ENCODE measurements at regions of chr6 and their contacts with region 1.

Region 1: DNA sequence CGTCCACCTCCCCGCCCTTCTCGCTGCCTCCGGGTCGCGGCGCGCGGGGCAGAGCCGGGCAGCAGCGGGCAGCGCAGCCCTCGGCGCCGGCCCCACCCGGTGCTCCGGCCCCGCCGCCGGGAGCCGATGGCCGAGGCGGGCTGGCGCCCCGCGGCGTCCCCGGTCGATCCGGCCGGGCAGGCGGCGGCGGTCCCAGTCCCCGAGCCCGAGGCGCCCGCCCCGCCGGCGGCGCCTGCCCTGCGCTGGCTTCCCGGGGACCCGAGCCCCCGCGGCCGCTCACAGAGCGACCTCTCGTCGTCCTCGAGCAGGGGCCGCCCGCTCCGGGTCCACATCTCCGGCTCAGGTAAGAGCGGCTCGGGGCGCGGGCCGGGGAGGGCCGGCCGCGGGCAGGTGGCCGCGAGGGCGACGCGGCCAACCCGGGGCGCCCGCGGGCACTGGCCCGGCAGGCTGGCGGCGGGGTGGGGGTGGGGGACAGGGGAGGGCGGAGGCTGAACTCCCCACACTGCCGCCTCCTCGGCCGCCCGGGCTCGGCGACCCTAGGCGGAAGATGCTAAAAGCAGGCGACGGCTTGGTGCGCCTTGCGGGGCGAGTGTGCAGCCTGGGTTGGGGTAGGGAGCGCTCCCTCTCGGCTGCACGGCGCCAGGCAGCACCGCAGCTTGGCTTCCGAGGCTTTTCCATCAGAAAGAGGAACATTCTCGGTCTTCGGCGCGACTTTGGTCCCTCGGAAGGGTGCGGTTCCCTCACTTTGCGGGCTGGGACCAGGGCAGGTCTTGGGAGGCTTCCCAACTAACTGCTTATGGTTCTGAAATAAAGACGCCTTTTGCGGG is 25.6 kb upstream of the FUCA2 start:
- DNase-seq: peak; percentile 25 to 79 (median 57)
- ATAC-seq: peak; percentile 75
- H3K4me3 ChIP-seq: peak overlapping the region; percentile 54 to 73
- H3K4me3 Mint-ChIP-seq: peak overlapping the region; percentile 84
- H3K27ac ChIP-seq: peak overlapping the region in 1 of 2 experiments; percentile 62
- H3K27ac Mint-ChIP-seq: peak overlapping the region; percentile 90
- H3K4me1 ChIP-seq: peaks cover 5% of the 10 kb centered on the region
- H3K4me1 Mint-ChIP-seq: peaks cover 36% of the 10 kb centered on the region
- H3K27me3 ChIP-seq: no peaks in the 10 kb centered on the region
- H3K27me3 Mint-ChIP-seq: no peaks in the 10 kb centered on the region
- CTCF ChIP-seq: peak; percentile 53

Region 2: GRCh38 chr6:143510991-143511891 is 25.8 kb before region 1 on chr6 and contains the start of gene FUCA2:
- CTCF ChIA-PET with region 1: interaction called, 5 read pairs
- POLR2A ChIA-PET with region 1: interaction called, 9 read pairs
- intact Hi-C with region 1: loop called in 1 of 2 experiments (anchors 2 kb)
- DNase-seq: peak; percentile 28 to 83 (median 64)
- ATAC-seq: peak; percentile 70
- H3K4me3 ChIP-seq: peak within 1 kb of the TSS; percentile 61 to 71
- H3K4me3 Mint-ChIP-seq: peak within 1 kb of the TSS; percentile 90
- H3K27ac ChIP-seq: peak within 1 kb of the TSS; percentile 26 to 70
- H3K27ac Mint-ChIP-seq: peak within 1 kb of the TSS; percentile 82
- H3K4me1 ChIP-seq: peaks cover 10% of the 10 kb centered on the region
- H3K4me1 Mint-ChIP-seq: peaks cover 25% of the 10 kb centered on the region
- H3K27me3 ChIP-seq: no peaks in the 10 kb centered on the region
- H3K27me3 Mint-ChIP-seq: no peaks in the 10 kb centered on the region
- CTCF ChIP-seq: no peak
- total RNA-seq, gene FUCA2: 1.6 to 2.2 TPM

Region 3: DNA sequence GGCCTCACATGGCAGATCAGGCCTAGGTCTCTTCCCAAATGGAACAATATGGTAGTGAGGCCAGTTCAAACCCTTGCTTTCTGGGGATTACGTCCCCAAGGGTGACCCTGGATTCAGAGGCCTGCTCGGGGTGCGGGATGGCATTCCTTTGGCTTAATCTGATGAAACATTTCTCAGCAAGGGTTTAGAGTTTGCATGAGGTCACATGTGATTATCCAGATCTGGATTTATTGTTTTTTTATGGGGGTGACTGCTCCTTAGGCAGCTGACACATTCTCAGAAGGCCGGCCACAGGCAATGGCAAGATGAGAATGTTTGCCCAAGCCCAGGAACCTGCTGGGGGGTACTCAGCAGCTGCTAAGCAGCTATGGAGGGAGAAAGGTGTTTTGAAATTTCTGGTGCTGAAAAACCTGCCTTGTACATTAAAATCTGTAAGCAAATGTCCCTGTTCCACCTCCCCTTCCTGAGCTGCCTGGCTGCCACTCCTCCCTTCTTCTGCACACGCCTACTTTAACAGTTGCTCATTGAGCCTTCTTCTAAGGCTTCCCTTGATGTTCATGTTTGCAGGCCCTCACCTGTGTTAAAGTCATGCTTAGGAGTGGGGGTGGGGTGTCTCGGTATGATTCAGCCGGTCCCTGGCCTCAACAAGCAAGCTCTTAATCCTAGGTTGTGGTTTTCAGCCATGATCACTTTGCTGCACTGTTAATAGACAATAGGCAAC is 12.3 kb after region 1 on chr6:
- CTCF ChIA-PET with region 1: interaction called, 4 read pairs
- POLR2A ChIA-PET with region 1: interaction called, 8 read pairs
- intact Hi-C with region 1: loop called in 1 of 2 experiments (anchors 1 kb)
- DNase-seq: peak in 2 of 9 experiments; percentile 20 to 32
- ATAC-seq: peak; percentile 34
- H3K4me3 ChIP-seq: no peak overlapping the region
- H3K4me3 Mint-ChIP-seq: no peak overlapping the region
- H3K27ac ChIP-seq: no peak overlapping the region
- H3K27ac Mint-ChIP-seq: peak overlapping the region; percentile 9
- H3K4me1 ChIP-seq: peaks cover 10% of the 10 kb centered on the region
- H3K4me1 Mint-ChIP-seq: peaks cover 64% of the 10 kb centered on the region
- H3K27me3 ChIP-seq: no peaks in the 10 kb centered on the region
- H3K27me3 Mint-ChIP-seq: no peaks in the 10 kb centered on the region
- CTCF ChIP-seq: no peak

Region 4: GRCh38 chr6:143570147-143570853 is 33.2 kb after region 1 on chr6:
- CTCF ChIA-PET with region 1: interaction called, 6 read pairs
- POLR2A ChIA-PET with region 1: interaction called, 3 read pairs
- intact Hi-C with region 1: loop called in 1 of 2 experiments (anchors 5 kb)
- DNase-seq: no peak
- ATAC-seq: no peak
- H3K4me3 ChIP-seq: no peak overlapping the region
- H3K4me3 Mint-ChIP-seq: no peak overlapping the region
- H3K27ac ChIP-seq: no peak overlapping the region
- H3K27ac Mint-ChIP-seq: no peak overlapping the region
- H3K4me1 ChIP-seq: no peaks in the 10 kb centered on the region
- H3K4me1 Mint-ChIP-seq: peaks cover 16% of the 10 kb centered on the region
- H3K27me3 ChIP-seq: no peaks in the 10 kb centered on the region
- H3K27me3 Mint-ChIP-seq: no peaks in the 10 kb centered on the region
- CTCF ChIP-seq: no peak

Region 5: GRCh38 chr6:143806282-143807102 is 269.4 kb after region 1 on chr6:
- CTCF ChIA-PET with region 1: no interaction called
- POLR2A ChIA-PET with region 1: no interaction called
- intact Hi-C with region 1: no loop called
- DNase-seq: peak in 1 of 9 experiments; percentile 6
- ATAC-seq: no peak
- H3K4me3 ChIP-seq: no peak overlapping the region
- H3K4me3 Mint-ChIP-seq: no peak overlapping the region
- H3K27ac ChIP-seq: no peak overlapping the region
- H3K27ac Mint-ChIP-seq: peak overlapping the region; percentile 27
- H3K4me1 ChIP-seq: no peaks in the 10 kb centered on the region
- H3K4me1 Mint-ChIP-seq: no peaks in the 10 kb centered on the region
- H3K27me3 ChIP-seq: no peaks in the 10 kb centered on the region
- H3K27me3 Mint-ChIP-seq: no peaks in the 10 kb centered on the region
- CTCF ChIP-seq: no peak

Measured in CD8-positive, alpha-beta T cell (primary cell).